H1 (cell line): ENCODE measurements at regions of chr6 and their contacts with region 1.

Region 1: GRCh38 chr6:142177201-142177600 is 30.1 kb downstream of the VTA1 start:
- DNase-seq: no peak
- H3K4me3 ChIP-seq: no peak overlapping the region
- H3K27ac ChIP-seq: no peak overlapping the region
- H3K4me1 ChIP-seq: no peaks in the 10 kb centered on the region
- H3K27me3 ChIP-seq: no peaks in the 10 kb centered on the region
- CTCF ChIP-seq: no peak
- EP300 ChIP-seq: no peak
- POLR2A ChIP-seq: no peak
- RAD21 ChIP-seq: no peak

Region 2: GRCh38 chr6:142187209-142187608 is 10.0 kb after region 1 on chr6:
- CTCF ChIA-PET with region 1: interaction called, 19 read pairs
- POLR2A ChIA-PET with region 1: no interaction called
- DNase-seq: no peak
- H3K4me3 ChIP-seq: no peak overlapping the region
- H3K27ac ChIP-seq: no peak overlapping the region
- H3K4me1 ChIP-seq: no peaks in the 10 kb centered on the region
- H3K27me3 ChIP-seq: no peaks in the 10 kb centered on the region
- CTCF ChIP-seq: no peak
- EP300 ChIP-seq: no peak
- POLR2A ChIP-seq: no peak
- RAD21 ChIP-seq: no peak

Region 3: GRCh38 chr6:142200846-142201628 is 23.8 kb after region 1 on chr6:
- CTCF ChIA-PET with region 1: no interaction called
- POLR2A ChIA-PET with region 1: no interaction called
- DNase-seq: no peak
- H3K4me3 ChIP-seq: no peak overlapping the region
- H3K27ac ChIP-seq: no peak overlapping the region
- H3K4me1 ChIP-seq: no peaks in the 10 kb centered on the region
- H3K27me3 ChIP-seq: peaks cover 0 to 1% (median 0%) of the 10 kb centered on the region in 4 experiments; a peak in 1 of 7 replicates
- CTCF ChIP-seq: no peak
- EP300 ChIP-seq: no peak
- POLR2A ChIP-seq: no peak
- RAD21 ChIP-seq: no peak